Sigmoid colon (tissue), 7 donors: ENCODE measurements at regions of chr14 and their contacts with region 1.

Region 1: GRCh38 chr14:54686219-54686870 is 119.4 kb downstream of the SAMD4A start:
- DNase-seq: peak; percentile 87
- H3K4me3 ChIP-seq: no peak overlapping the region
- H3K27ac ChIP-seq: peak overlapping the region; percentile 73 to 95 (median 82)
- H3K4me1 ChIP-seq: peaks cover 0 to 78% (median 72%) of the 10 kb centered on the region in 4 donors
- H3K27me3 ChIP-seq: no peaks in the 10 kb centered on the region
- CTCF ChIP-seq: no peak
- EP300 ChIP-seq: peak in 1 of 4 donors; percentile 51
- POLR2A ChIP-seq: no peak

Region 2: DNA sequence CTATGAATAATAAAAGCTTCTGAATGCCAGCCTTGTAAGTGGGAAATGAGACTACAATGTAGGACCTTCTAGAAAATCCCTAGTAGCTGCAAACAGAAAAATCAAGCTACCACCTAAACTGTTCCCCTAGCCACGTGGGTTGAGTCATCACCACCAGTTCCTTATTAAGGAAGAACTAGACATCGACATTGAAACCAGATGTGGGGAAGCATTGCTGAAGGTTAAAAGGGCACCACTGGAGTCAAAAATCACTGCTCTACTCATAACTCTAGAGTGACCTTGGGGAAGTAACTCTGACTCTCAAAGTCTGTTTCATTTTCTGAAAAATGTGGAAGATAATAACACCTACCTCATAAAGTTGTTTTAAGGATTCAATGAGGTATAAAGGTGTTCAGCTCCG is 235.8 kb before region 1 on chr14:
- intact Hi-C with region 1: no loop called
- DNase-seq: no peak
- H3K4me3 ChIP-seq: no peak overlapping the region
- H3K27ac ChIP-seq: no peak overlapping the region
- H3K4me1 ChIP-seq: peaks cover 0 to 13% (median 12%) of the 10 kb centered on the region in 4 donors
- H3K27me3 ChIP-seq: no peaks in the 10 kb centered on the region
- CTCF ChIP-seq: no peak
- EP300 ChIP-seq: no peak
- POLR2A ChIP-seq: no peak

Region 3: DNA sequence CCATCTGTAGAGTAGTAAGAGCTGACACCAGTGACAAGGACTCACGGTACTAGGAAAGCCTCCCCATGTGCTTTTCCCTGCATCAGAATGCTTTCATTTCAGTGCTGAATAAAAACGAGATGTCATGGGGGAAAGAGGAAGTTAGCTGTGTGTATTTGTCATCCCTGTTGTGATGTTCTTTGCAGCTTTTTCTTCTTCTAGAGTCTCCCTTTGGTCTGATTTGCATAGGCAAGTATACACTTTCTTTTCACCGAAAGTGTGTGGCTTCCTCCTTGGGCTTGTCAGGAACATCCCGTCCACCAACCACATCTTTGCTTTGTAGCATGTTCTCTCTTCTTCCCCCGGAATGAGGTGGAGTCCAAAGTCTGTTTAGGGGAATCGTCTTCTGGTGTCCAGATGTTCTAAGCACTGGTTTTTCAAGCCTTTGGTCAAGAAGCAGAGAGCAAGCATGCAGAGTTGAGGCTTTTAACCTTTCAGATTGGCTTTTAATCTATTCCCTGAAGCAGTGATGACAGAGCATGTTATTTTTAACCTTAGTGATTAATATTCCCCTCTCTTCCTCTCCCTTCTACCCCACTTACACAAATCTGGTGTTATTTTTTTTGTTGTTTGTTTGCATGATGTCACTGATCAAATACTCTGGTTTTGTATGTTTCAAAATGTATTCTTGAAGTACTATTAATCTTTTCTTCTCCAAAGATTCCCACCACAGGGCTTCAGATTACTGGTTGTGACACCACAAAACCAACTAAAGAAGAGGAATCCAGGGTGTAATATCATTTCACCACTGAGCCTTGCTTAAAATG is 44.0 kb after region 1 on chr14:
- intact Hi-C with region 1: loop called (anchors 5 kb)
- DNase-seq: no peak
- H3K4me3 ChIP-seq: peak overlapping the region in 1 of 4 donors; percentile 14
- H3K27ac ChIP-seq: peak overlapping the region; percentile 52 to 84 (median 72)
- H3K4me1 ChIP-seq: peaks cover 0 to 64% (median 55%) of the 10 kb centered on the region in 4 donors
- H3K27me3 ChIP-seq: no peaks in the 10 kb centered on the region
- CTCF ChIP-seq: no peak
- EP300 ChIP-seq: no peak
- POLR2A ChIP-seq: no peak